Endothelial cell of umbilical vein (primary cell): ENCODE measurements at regions of chr13 and their contacts with region 1.

Region 1: GRCh38 chr13:30364876-30365275 is 57.4 kb upstream of the UBE2L5 start:
- DNase-seq: peak; percentile 95
- H3K4me3 ChIP-seq: peak overlapping the region in 1 of 3 experiments; percentile 29
- H3K27ac ChIP-seq: peak overlapping the region; percentile 95
- H3K4me1 ChIP-seq: peaks cover 30% of the 10 kb centered on the region
- H3K27me3 ChIP-seq: no peaks in the 10 kb centered on the region
- CTCF ChIP-seq: no peak
- POLR2A ChIP-seq: peak; percentile 61

Region 2: GRCh38 chr13:30306762-30307193 is 58.1 kb before region 1 on chr13:
- CTCF ChIA-PET with region 1: no interaction called
- POLR2A ChIA-PET with region 1: no interaction called
- dilution Hi-C with region 1: no loop called
- intact Hi-C with region 1: loop called (anchors 2 kb)
- DNase-seq: peak; percentile 90
- H3K4me3 ChIP-seq: peak overlapping the region; percentile 36 to 88 (median 77)
- H3K27ac ChIP-seq: peak overlapping the region; percentile 86
- H3K4me1 ChIP-seq: peaks cover 24% of the 10 kb centered on the region
- H3K27me3 ChIP-seq: no peaks in the 10 kb centered on the region
- CTCF ChIP-seq: no peak
- POLR2A ChIP-seq: peak; percentile 50

Region 3: GRCh38 chr13:30395192-30396084 is 30.6 kb after region 1 on chr13:
- CTCF ChIA-PET with region 1: no interaction called
- POLR2A ChIA-PET with region 1: no interaction called
- dilution Hi-C with region 1: no loop called
- intact Hi-C with region 1: loop called (anchors 1 kb)
- DNase-seq: peak; percentile 89
- H3K4me3 ChIP-seq: peak overlapping the region; percentile 39 to 96 (median 95)
- H3K27ac ChIP-seq: peak overlapping the region; percentile 66
- H3K4me1 ChIP-seq: peaks cover 14% of the 10 kb centered on the region
- H3K27me3 ChIP-seq: peaks cover 4 to 7% of the 10 kb centered on the region in 2 experiments
- CTCF ChIP-seq: no peak
- POLR2A ChIP-seq: peak; percentile 89